Mammary epithelial cell (primary cell): ENCODE measurements at regions of chr5 and their contacts with region 1.

Region 1: DNA sequence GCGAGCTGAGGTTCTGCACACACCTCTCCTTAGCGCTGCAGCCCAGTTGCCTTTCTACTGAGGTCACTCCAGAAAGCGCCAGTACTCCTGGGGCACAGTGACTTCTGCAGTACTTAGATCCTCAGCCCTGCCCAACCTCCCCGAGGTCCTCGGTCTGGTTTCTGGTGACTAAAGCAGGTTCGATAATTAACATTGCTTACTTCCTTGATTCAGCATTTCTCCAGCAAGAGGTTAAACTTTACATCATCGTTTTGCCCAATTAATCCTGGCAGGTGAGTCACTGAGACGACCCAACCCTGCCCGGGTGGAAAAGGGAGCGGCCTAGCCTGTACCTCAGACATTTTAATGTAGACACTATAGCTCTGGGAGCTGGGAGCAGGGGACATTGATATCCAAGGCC is 77.6 kb downstream of the PLAC8L1 start:
- DNase-seq: peak; percentile 91
- H3K4me3 ChIP-seq: no peak overlapping the region
- H3K27ac ChIP-seq: peak overlapping the region; percentile 50
- H3K4me1 ChIP-seq: peaks cover 21% of the 10 kb centered on the region
- H3K27me3 ChIP-seq: no peaks in the 10 kb centered on the region
- CTCF ChIP-seq: no peak

Region 2: GRCh38 chr5:145619806-145620310 is 407.9 kb before region 1 on chr5:
- CTCF ChIA-PET with region 1: no interaction called
- dilution Hi-C with region 1: no loop called
- in situ Hi-C with region 1: no loop called
- intact Hi-C with region 1: no loop called
- DNase-seq: no peak
- H3K4me3 ChIP-seq: no peak overlapping the region
- H3K27ac ChIP-seq: no peak overlapping the region
- H3K4me1 ChIP-seq: no peaks in the 10 kb centered on the region
- H3K27me3 ChIP-seq: no peaks in the 10 kb centered on the region
- CTCF ChIP-seq: no peak

Region 3: GRCh38 chr5:145678255-145678654 is 349.5 kb before region 1 on chr5:
- CTCF ChIA-PET with region 1: no interaction called
- dilution Hi-C with region 1: no loop called
- in situ Hi-C with region 1: no loop called
- intact Hi-C with region 1: no loop called
- DNase-seq: no peak
- H3K4me3 ChIP-seq: no peak overlapping the region
- H3K27ac ChIP-seq: no peak overlapping the region
- H3K4me1 ChIP-seq: no peaks in the 10 kb centered on the region
- H3K27me3 ChIP-seq: no peaks in the 10 kb centered on the region
- CTCF ChIP-seq: no peak

Region 4: DNA sequence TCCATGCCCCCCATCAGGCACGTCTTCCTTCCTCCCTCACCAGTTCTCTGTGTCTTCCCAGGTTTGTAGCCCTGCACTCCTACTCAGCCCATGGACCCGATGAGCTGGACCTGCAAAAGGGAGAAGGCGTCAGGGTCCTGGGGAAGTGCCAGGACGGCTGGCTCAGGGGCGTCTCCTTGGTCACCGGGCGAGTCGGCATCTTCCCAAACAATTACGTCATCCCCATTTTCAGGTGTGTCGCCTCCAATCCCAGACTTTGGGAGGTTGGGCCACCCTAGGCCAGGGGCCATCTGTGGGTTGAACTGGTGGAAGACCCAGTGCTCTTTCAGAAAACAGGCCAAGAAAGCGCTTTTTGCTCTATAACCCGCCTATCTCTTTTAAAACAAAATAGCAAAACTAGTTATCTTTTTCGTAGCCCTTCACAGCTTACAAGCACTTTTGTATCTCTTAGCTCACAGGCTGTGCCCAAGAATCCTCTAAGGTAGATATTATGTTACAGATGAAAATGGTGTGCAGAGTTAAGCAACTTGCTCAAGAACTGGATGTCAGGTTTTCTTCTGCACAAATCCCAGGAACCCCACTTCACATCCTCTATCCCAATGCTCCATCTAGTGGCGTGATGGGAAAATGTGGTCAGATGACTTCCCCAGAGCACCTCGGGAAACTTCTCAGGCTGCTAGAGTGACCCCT is 21.4 kb after region 1 on chr5:
- CTCF ChIA-PET with region 1: no interaction called
- dilution Hi-C with region 1: no loop called
- in situ Hi-C with region 1: no loop called
- intact Hi-C with region 1: no loop called
- DNase-seq: peak; percentile 61
- H3K4me3 ChIP-seq: no peak overlapping the region
- H3K27ac ChIP-seq: no peak overlapping the region
- H3K4me1 ChIP-seq: peaks cover 20% of the 10 kb centered on the region
- H3K27me3 ChIP-seq: no peaks in the 10 kb centered on the region
- CTCF ChIP-seq: peak; percentile 75 to 78

Region 5: GRCh38 chr5:146103594-146103993 is 75.8 kb after region 1 on chr5:
- CTCF ChIA-PET with region 1: no interaction called
- dilution Hi-C with region 1: loop called (anchors 5 kb)
- in situ Hi-C with region 1: no loop called
- intact Hi-C with region 1: no loop called
- DNase-seq: peak; percentile 16
- H3K4me3 ChIP-seq: no peak overlapping the region
- H3K27ac ChIP-seq: no peak overlapping the region
- H3K4me1 ChIP-seq: peaks cover 3% of the 10 kb centered on the region
- H3K27me3 ChIP-seq: no peaks in the 10 kb centered on the region
- CTCF ChIP-seq: no peak